ENCODE measurements at regions of chr1 and their contacts with region 1.

Region 1: DNA sequence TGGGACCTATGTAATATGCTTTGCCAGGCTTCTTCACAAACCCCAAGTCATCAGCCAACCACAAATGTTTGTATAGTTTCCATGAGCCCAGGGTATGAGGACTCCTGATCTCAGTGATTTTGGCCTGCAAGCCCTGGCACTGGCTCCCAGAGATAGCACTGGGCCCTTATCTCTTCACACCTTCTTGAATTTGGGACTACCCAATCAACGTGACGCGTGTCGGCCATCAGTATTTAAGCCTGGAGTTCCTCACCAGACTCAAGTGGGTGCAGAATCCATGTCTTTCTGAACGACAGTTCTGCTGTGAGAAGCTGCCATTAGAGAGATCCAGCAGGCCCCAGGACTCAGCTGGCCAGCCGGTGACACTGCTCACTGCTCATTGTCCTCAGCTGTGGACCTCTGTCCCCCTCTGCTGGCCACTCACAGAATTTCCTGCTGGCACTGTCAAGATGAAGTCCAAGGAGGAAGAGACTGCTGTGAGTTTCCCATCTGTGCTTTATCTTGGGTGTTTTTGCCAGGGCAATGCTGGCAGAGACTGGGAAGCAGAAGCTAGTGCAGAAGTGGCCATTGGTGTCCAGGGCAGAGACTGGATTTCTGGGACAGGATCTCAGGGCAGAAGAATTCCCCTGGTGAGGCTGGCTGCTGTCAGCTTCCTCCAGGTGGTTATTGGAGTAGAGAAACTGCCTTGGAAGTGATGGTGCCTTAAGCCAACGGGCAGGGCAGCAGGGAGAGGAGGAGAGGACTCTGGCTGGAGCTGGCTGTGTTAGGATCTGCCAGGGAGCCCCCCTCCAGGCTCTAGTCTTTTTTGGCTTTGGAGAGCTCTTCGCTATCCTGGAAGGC is 28.4 kb downstream of the TMCC2 start:
- DNase-seq: peak; percentile 68 to 86 (median 71)
- H3K4me3 ChIP-seq: no peak overlapping the region
- H3K4me3 Mint-ChIP-seq: no peak overlapping the region
- H3K27ac ChIP-seq: no peak overlapping the region
- H3K27ac Mint-ChIP-seq: peak overlapping the region in 1 of 8 donors; percentile 57
- H3K4me1 ChIP-seq: no peaks in the 10 kb centered on the region
- H3K4me1 Mint-ChIP-seq: peaks cover 0 to 2% (median 0%) of the 10 kb centered on the region in 3 donors
- H3K27me3 ChIP-seq: no peaks in the 10 kb centered on the region
- H3K27me3 Mint-ChIP-seq: no peaks in the 10 kb centered on the region

Region 2: DNA sequence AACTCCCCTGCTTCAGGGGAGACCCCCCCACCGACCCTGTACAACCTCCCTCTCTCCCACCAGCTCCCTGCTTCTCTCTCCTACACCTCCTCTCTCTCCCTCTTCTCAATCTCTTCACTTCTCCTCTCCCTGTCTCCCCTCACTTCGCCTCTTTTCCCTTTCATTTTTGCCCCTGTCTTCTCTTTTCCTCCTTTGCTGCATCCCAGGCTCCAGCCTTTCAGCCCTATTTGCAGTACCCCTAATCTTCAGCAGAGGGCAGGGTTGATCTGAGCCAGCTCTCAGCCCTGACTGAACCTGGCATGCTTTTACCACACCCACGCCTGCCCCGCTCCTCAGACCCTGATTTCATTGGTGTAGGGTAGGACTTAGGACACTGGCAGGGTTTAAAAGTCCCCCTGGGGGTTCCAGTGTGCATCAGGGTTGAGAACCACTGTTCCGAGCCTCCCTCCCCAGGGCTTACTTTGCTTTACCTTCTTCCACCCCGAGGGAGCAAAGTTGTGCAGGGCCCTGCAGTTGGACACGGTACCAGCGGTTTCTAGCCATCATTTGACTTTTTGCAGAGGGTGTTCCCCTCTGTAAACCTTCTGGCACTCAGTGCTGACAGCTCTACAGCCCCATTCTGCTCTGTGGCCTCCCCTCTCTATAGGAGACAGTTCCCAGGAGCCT is 280.5 kb before region 1 on chr1:
- CTCF ChIA-PET with region 1: interaction called, 30 read pairs
- POLR2A ChIA-PET with region 1: no interaction called
- DNase-seq: peak in 3 of 5 donors; percentile 9 to 41 (median 12)
- H3K4me3 ChIP-seq: no peak overlapping the region
- H3K4me3 Mint-ChIP-seq: no peak overlapping the region
- H3K27ac ChIP-seq: no peak overlapping the region
- H3K27ac Mint-ChIP-seq: no peak overlapping the region
- H3K4me1 ChIP-seq: no peaks in the 10 kb centered on the region
- H3K4me1 Mint-ChIP-seq: no peaks in the 10 kb centered on the region
- H3K27me3 ChIP-seq: no peaks in the 10 kb centered on the region
- H3K27me3 Mint-ChIP-seq: peaks cover 7 to 51% of the 10 kb centered on the region in 2 donors

Region 3: GRCh38 chr1:205121660-205122488 is 134.3 kb before region 1 on chr1 and contains the start of gene RBBP5:
- CTCF ChIA-PET with region 1: interaction called, 14 read pairs
- POLR2A ChIA-PET with region 1: no interaction called
- DNase-seq: peak; percentile 87 to 96 (median 94)
- H3K4me3 ChIP-seq: peak within 1 kb of the TSS; percentile 99
- H3K4me3 Mint-ChIP-seq: peak within 1 kb of the TSS; percentile 94 to 99 (median 98)
- H3K27ac ChIP-seq: peak within 1 kb of the TSS; percentile 89
- H3K27ac Mint-ChIP-seq: peak within 1 kb of the TSS; percentile 97 to 100 (median 100)
- H3K4me1 ChIP-seq: peaks cover 31% of the 10 kb centered on the region
- H3K4me1 Mint-ChIP-seq: peaks cover 42 to 58% (median 50%) of the 10 kb centered on the region in 3 donors
- H3K27me3 ChIP-seq: no peaks in the 10 kb centered on the region
- H3K27me3 Mint-ChIP-seq: no peaks in the 10 kb centered on the region
- total RNA-seq, gene RBBP5: 27.5 to 30.8 TPM

Region 4: DNA sequence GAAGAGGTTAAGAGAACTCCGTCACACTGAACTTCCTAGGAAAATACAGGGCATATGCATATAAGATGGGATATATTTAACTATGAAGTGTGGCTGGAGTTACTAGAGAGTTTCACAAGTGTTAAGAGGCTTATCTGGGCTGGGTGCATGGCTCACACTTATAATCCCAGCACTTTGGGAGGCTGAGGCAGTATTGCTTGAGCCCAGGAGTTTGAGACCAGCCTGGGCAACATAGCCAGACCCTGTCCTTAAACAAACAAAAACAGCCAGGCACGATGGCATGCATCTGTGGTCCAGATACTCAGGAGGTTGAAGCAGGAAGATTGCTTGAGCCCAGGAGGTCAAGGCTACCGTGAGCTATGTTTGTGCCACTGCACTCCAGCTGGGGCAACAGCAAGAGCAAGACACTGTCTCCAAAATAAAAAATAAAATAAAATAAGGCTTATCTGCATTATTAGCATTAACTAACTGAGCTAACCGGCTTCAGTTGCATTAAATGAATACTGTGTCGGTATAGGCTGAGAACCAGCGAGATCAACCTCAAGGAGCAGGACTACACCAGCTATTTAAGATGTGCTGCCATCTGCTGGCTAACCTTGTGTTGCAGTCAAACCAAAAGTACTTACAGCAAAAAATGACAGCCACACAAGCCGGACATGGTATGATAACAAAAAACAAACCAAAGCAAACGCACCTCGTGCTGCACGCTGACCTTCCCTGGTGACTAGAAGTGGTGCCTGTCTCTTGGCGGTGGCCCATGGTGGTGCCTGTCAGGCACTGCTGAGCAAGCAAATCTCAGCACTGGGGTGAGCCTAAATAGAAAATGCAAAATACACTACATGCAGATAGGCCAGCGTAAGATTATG is 114.7 kb before region 1 on chr1:
- CTCF ChIA-PET with region 1: interaction called, 13 read pairs
- POLR2A ChIA-PET with region 1: no interaction called
- DNase-seq: peak; percentile 46 to 76 (median 61)
- H3K4me3 ChIP-seq: peak overlapping the region; percentile 14
- H3K4me3 Mint-ChIP-seq: peak overlapping the region in 3 of 7 donors; percentile 16 to 42 (median 24)
- H3K27ac ChIP-seq: no peak overlapping the region
- H3K27ac Mint-ChIP-seq: peak overlapping the region in 2 of 8 donors; percentile 13 to 48
- H3K4me1 ChIP-seq: peaks cover 9% of the 10 kb centered on the region
- H3K4me1 Mint-ChIP-seq: peaks cover 6 to 12% (median 8%) of the 10 kb centered on the region in 3 donors
- H3K27me3 ChIP-seq: no peaks in the 10 kb centered on the region
- H3K27me3 Mint-ChIP-seq: no peaks in the 10 kb centered on the region

Region 5: DNA sequence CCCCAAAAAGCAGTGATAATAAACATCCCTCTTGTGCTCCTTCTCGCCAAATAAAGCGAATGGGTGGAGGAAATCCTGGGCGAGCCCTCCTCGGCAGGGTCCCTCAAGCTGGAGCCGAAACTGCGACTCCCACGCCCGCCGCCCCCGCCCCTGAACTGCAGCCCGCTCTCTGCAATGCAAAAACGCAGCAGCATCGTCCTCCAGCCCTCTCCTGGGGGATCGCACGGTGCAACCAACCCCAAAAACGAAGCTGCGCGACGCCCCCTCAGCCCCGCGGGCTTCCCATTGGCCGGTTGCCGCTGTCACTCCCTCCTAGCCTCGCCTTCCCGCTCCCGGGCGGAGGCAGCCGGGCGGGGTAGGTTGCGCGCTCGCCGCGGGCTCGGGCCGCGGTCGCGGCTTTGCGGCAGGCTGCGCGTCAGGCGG is 28.6 kb before region 1 on chr1 and contains the start of gene TMCC2:
- CTCF ChIA-PET with region 1: interaction called, 69 read pairs
- POLR2A ChIA-PET with region 1: no interaction called
- DNase-seq: peak; percentile 69 to 88 (median 80)
- H3K4me3 ChIP-seq: peak within 1 kb of the TSS; percentile 74
- H3K4me3 Mint-ChIP-seq: peak within 1 kb of the TSS; percentile 89 to 97 (median 95)
- H3K27ac ChIP-seq: no peak within 1 kb of the TSS
- H3K27ac Mint-ChIP-seq: peak within 1 kb of the TSS; percentile 69 to 97 (median 84)
- H3K4me1 ChIP-seq: peaks cover 17% of the 10 kb centered on the region
- H3K4me1 Mint-ChIP-seq: peaks cover 21 to 29% (median 27%) of the 10 kb centered on the region in 3 donors
- H3K27me3 ChIP-seq: no peaks in the 10 kb centered on the region
- H3K27me3 Mint-ChIP-seq: peaks cover 9% of the 10 kb centered on the region in 2 donors
- total RNA-seq, gene TMCC2: 7.1 to 8.4 TPM

Measured in CD8-positive, alpha-beta memory T cell (primary cell).